Dorsolateral prefrontal cortex (tissue), 120 donors: ENCODE measurements at regions of chr11 and their contacts with region 1.

Region 1: GRCh38 chr11:59615637-59616395 is at the start of gene OSBP:
- DNase-seq: peak; percentile 96 to 100 (median 100)
- H3K4me3 ChIP-seq: peak within 1 kb of the TSS; percentile 64 to 94 (median 85)
- H3K27ac ChIP-seq: peak within 1 kb of the TSS in 58 of 59 donors; percentile 27 to 96 (median 87)
- H3K27me3 ChIP-seq: no peaks in the 10 kb centered on the region
- CTCF ChIP-seq: peak in 23 of 56 donors; percentile 9 to 37 (median 25)
- total RNA-seq, gene OSBP: 30.7 to 54.6 (median 42.6) TPM

Region 2: GRCh38 chr11:59534676-59535075 is 81.1 kb before region 1 on chr11:
- intact Hi-C with region 1: loop called (anchors 5 kb)
- DNase-seq: no peak
- H3K4me3 ChIP-seq: no peak overlapping the region
- H3K27ac ChIP-seq: no peak overlapping the region
- H3K27me3 ChIP-seq: no peaks in the 10 kb centered on the region
- CTCF ChIP-seq: no peak

Region 3: GRCh38 chr11:59560702-59561469 is 54.9 kb before region 1 on chr11:
- intact Hi-C with region 1: loop called (anchors 5 kb)
- DNase-seq: peak; percentile 68 to 86 (median 75)
- H3K4me3 ChIP-seq: peak overlapping the region; percentile 52 to 98 (median 85)
- H3K27ac ChIP-seq: peak overlapping the region; percentile 67 to 97 (median 93)
- H3K27me3 ChIP-seq: no peaks in the 10 kb centered on the region
- CTCF ChIP-seq: peak in 4 of 56 donors; percentile 6 to 22 (median 10)

Region 4: GRCh38 chr11:59659981-59660380 is 44.2 kb after region 1 on chr11:
- intact Hi-C with region 1: loop called in 1 of 2 experiments (anchors 5 kb)
- DNase-seq: no peak
- H3K4me3 ChIP-seq: no peak overlapping the region
- H3K27ac ChIP-seq: peak overlapping the region in 1 of 59 donors; percentile 33
- H3K27me3 ChIP-seq: no peaks in the 10 kb centered on the region
- CTCF ChIP-seq: no peak

Region 5: GRCh38 chr11:59668950-59669610 is 53.3 kb after region 1 on chr11 and contains the start of gene PATL1:
- intact Hi-C with region 1: loop called (anchors 1 kb)
- DNase-seq: peak; percentile 98 to 99 (median 98)
- H3K4me3 ChIP-seq: peak within 1 kb of the TSS; percentile 62 to 97 (median 87)
- H3K27ac ChIP-seq: peak within 1 kb of the TSS; percentile 91 to 100 (median 99)
- H3K27me3 ChIP-seq: no peaks in the 10 kb centered on the region
- CTCF ChIP-seq: peak in 23 of 56 donors; percentile 3 to 52 (median 29)
- total RNA-seq, gene PATL1: 14.6 to 38.0 (median 20.9) TPM

Region 6: DNA sequence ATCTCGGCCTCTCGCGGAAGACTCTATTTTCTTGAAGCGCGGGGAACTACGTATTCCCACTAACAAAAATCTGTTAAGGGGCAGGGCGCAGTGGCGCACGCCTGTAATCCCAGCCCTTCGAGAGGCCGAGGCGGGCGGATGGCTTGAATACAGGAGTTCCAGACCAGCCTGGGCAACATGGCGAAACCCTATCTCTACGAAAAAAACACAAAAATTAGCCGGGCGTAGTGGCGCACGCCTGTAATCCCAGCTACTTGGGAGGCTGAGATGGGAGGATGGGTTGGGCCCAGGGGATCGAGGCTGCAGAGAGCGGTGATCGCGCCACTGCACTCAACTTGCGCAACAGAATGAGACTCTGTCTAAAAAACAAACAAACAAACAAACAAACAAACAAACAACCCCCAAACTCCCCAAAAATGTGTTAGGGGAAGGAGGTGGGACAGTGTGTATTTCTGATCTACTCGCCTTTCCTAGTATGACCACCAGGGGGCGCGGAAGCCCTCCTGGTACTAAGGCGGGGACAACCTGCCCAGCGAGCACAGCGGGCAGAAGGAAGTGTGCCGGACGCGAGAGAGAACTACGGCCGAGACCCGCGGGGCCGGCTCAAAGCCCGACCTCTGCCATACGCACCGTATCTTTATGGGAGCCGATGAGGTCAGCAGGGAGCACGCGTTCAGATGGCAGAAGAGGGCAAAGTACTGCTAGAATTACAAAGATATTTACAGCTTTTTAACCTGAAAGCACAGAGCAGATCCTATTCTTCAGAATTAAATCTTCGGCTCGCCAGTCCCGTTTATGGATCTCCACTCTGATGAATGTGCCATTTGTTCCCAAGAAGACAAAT is 138.1 kb after region 1 on chr11:
- intact Hi-C with region 1: loop called in 1 of 2 experiments (anchors 10 kb)
- DNase-seq: peak; percentile 74 to 92 (median 86)
- H3K4me3 ChIP-seq: peak overlapping the region; percentile 65 to 98 (median 86)
- H3K27ac ChIP-seq: peak overlapping the region in 54 of 59 donors; percentile 19 to 96 (median 90)
- H3K27me3 ChIP-seq: no peaks in the 10 kb centered on the region
- CTCF ChIP-seq: peak; percentile 87 to 98 (median 95)